Ascending aorta (tissue), 2 donors: ENCODE measurements at regions of chr13 and their contacts with region 1.

Region 1: GRCh38 chr13:52617070-52618060 is 24.9 kb upstream of the HNRNPA1L2 start:
- DNase-seq: peak; percentile 21 to 91
- H3K4me3 ChIP-seq: peak overlapping the region; percentile 77 to 87
- H3K27ac ChIP-seq: peak overlapping the region; percentile 76 to 88
- H3K4me1 ChIP-seq: peaks cover 0 to 5% of the 10 kb centered on the region in 2 donors
- H3K27me3 ChIP-seq: no peaks in the 10 kb centered on the region
- CTCF ChIP-seq: peak in 1 of 3 experiments; percentile 3

Region 2: DNA sequence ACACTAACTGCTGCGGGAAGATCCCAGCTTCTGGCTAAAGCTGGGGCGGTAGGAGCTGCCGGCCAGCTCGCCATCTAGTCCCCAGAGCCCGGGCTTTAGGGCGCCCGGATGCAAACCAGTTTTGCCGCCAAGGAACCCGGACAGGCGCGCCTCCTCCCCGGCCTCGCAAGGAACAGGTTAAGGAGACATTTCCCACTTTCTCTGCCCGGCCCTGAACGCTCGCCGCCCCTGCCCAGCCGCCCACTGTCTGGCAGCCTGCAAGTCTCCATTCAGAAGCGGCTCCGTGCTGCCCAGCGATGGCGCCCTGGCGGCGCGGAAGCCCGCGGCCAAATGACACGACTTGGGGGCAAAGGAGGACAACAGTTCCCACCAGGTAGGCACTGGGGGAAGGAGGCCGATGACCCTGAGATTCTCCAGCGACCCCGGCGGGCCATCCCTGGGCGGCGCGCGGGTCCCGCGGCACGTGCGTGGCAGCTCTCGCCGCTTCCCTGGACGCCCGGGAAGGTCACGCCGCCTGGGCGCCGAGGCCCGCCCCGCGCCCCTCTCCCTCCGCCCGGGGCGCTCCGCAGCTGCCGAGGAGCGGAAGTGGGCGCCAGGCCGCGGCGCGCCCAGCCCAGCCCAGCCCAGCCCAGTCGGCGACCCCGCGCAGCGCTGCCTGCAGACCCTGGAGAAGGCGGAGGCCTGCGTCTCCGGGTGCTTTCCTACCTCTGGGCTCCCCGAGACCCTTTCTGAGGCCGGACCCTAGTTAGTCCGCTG is 17.3 kb before region 1 on chr13:
- intact Hi-C with region 1: loop called (anchors 1 kb)
- DNase-seq: no peak
- H3K4me3 ChIP-seq: peak overlapping the region; percentile 80 to 92
- H3K27ac ChIP-seq: peak overlapping the region; percentile 70 to 91
- H3K4me1 ChIP-seq: peaks cover 0 to 7% of the 10 kb centered on the region in 2 donors
- H3K27me3 ChIP-seq: no peaks in the 10 kb centered on the region
- CTCF ChIP-seq: peak in 1 of 3 experiments; percentile 7

Region 3: DNA sequence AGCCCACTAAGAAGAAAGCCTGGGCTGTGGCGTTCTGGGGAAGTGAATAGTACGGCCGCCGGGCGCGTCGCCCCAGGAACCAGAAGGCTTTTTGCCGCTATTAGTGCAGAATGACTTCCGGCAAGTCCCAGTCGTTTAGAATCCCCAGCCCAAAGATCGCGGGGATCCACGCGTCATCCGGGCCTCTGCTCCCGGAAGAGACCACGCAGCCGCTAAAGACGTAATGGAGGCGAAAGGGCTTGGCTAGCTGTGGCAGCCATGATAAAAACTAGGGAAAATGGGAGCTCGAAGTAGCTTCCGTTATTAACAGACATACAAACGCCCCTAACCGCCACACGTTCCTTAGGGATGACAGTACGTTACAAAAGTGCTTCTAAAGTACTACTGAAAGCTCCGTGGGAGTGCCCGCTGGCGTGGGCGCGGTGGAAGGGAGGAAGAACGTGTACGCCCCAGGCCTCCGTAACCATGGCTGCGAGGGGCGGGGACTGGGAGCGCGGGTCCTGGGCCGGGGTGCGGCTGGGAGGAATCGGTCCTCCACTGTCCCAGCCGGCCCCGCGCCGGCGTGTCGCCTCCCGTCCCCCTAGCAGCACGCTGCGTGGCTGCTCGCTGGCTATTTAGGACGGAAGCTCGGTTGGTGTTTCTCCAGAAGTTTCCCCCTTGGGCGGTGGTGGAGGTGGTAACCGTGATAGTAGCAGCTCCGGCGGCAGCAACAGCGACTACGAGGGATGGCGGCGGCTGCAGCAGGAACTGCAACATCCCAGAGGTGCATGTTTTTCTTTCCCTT is 35.0 kb after region 1 on chr13 and contains the start of gene SUGT1:
- intact Hi-C with region 1: loop called (anchors 2 kb)
- DNase-seq: peak; percentile 88 to 98
- H3K4me3 ChIP-seq: peak within 1 kb of the TSS; percentile 83 to 96
- H3K27ac ChIP-seq: peak within 1 kb of the TSS; percentile 95 to 97
- H3K4me1 ChIP-seq: peaks cover 4 to 29% of the 10 kb centered on the region in 2 donors
- H3K27me3 ChIP-seq: no peaks in the 10 kb centered on the region
- CTCF ChIP-seq: peak; percentile 52 to 80 (median 73)
- total RNA-seq, gene SUGT1: 8.8 TPM

Region 4: GRCh38 chr13:52809310-52809769 is 192.0 kb after region 1 on chr13:
- intact Hi-C with region 1: no loop called
- DNase-seq: no peak
- H3K4me3 ChIP-seq: no peak overlapping the region
- H3K27ac ChIP-seq: no peak overlapping the region
- H3K4me1 ChIP-seq: no peaks in the 10 kb centered on the region
- H3K27me3 ChIP-seq: no peaks in the 10 kb centered on the region
- CTCF ChIP-seq: no peak

Region 5: DNA sequence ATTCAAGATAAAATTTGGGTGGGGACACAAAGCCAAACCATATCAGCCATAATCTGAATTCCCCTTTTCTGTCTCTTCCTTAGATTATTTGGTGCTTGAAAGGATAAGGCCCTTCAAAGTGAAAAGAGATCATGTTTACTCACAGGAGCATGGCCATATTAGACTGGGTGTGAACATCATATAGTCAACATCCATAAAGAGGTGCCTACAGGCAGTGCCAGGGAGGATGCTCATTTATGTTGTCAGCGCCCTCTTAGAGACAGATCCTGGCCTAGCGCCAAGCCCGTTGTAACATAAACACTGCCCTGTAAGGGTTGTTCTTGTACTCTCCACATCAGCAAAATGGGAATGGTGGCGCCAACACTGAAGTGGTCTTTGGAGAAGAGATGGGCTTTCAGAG is 214.9 kb after region 1 on chr13:
- intact Hi-C with region 1: no loop called
- DNase-seq: no peak
- H3K4me3 ChIP-seq: no peak overlapping the region
- H3K27ac ChIP-seq: no peak overlapping the region
- H3K4me1 ChIP-seq: no peaks in the 10 kb centered on the region
- H3K27me3 ChIP-seq: no peaks in the 10 kb centered on the region
- CTCF ChIP-seq: no peak